ENCODE measurements at regions of chr11 and their contacts with region 1.

Region 1: DNA sequence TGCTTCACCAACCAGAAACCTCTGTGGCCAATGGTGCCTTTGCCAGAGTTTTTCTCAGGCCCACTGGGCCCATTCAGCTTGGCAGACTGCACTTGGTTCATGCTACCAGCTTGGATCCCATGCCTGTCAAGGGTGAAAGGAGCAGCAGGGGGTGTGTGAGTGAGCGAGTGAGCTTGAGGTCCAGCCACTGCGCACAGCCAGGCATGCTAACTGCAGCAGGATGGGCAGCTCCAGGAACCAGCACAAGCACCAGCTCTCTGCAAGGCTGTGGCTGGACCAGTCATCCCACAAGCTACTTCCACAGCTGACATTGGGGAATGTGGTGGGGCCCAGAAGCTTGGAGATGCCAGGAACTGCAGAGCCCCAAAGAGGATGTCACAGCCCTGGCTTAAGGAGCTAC is 40.8 kb downstream of the DDIAS start:
- DNase-seq: no peak
- H3K4me3 ChIP-seq: no peak overlapping the region
- H3K27ac ChIP-seq: no peak overlapping the region
- H3K4me1 ChIP-seq: no peaks in the 10 kb centered on the region
- H3K27me3 ChIP-seq: no peaks in the 10 kb centered on the region
- CTCF ChIP-seq: no peak
- EP300 ChIP-seq: no peak
- POLR2A ChIP-seq: no peak
- RAD21 ChIP-seq: no peak

Region 2: DNA sequence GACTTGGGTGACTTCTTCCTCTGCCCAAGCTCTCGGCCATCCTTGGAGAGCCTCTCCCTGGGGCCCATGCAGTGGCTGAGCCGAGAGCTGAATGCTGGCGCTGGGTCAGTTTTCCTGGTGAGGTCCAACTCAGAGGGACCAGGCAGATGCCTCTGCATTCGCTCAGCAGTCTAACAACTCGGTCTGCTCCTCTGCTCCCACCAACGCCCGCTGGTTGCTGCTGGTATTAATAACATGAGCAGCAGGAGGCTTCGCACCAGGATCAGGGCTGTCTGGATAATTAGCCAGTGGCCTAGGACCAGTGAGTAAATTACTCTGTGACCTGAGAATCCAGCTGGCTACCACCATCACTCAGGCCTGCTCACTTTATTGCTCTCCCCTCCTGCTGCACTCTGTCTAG is 131.0 kb before region 1 on chr11:
- CTCF ChIA-PET with region 1: no interaction called
- POLR2A ChIA-PET with region 1: no interaction called
- DNase-seq: no peak
- H3K4me3 ChIP-seq: no peak overlapping the region
- H3K27ac ChIP-seq: no peak overlapping the region
- H3K4me1 ChIP-seq: peaks cover 2 to 4% (median 4%) of the 10 kb centered on the region in 4 experiments; a peak in 4 of 7 replicates
- H3K27me3 ChIP-seq: no peaks in the 10 kb centered on the region
- CTCF ChIP-seq: no peak
- EP300 ChIP-seq: no peak
- POLR2A ChIP-seq: no peak
- RAD21 ChIP-seq: no peak

Region 3: GRCh38 chr11:82927254-82927880 is 15.0 kb before region 1 on chr11:
- CTCF ChIA-PET with region 1: interaction called, 11 read pairs
- POLR2A ChIA-PET with region 1: no interaction called
- DNase-seq: no peak
- H3K4me3 ChIP-seq: no peak overlapping the region
- H3K27ac ChIP-seq: no peak overlapping the region
- H3K4me1 ChIP-seq: no peaks in the 10 kb centered on the region
- H3K27me3 ChIP-seq: no peaks in the 10 kb centered on the region
- CTCF ChIP-seq: peak in 2 of 3 experiments; percentile 58 to 61; a peak in 2 of 4 replicates
- EP300 ChIP-seq: no peak
- POLR2A ChIP-seq: no peak
- RAD21 ChIP-seq: peak; percentile 50 to 59

Region 4: GRCh38 chr11:83025267-83025720 is 82.9 kb after region 1 on chr11:
- CTCF ChIA-PET with region 1: no interaction called
- POLR2A ChIA-PET with region 1: no interaction called
- DNase-seq: no peak
- H3K4me3 ChIP-seq: no peak overlapping the region
- H3K27ac ChIP-seq: no peak overlapping the region
- H3K4me1 ChIP-seq: peaks cover 0 to 9% (median 7%) of the 10 kb centered on the region in 4 experiments; a peak in 4 of 7 replicates
- H3K27me3 ChIP-seq: no peaks in the 10 kb centered on the region
- CTCF ChIP-seq: no peak
- EP300 ChIP-seq: no peak
- POLR2A ChIP-seq: no peak
- RAD21 ChIP-seq: no peak

Measured in H1 (cell line).